Naive thymus-derived CD8-positive, alpha-beta T cell (primary cell): ENCODE measurements at regions of chr3 and their contacts with region 1.

Region 1: DNA sequence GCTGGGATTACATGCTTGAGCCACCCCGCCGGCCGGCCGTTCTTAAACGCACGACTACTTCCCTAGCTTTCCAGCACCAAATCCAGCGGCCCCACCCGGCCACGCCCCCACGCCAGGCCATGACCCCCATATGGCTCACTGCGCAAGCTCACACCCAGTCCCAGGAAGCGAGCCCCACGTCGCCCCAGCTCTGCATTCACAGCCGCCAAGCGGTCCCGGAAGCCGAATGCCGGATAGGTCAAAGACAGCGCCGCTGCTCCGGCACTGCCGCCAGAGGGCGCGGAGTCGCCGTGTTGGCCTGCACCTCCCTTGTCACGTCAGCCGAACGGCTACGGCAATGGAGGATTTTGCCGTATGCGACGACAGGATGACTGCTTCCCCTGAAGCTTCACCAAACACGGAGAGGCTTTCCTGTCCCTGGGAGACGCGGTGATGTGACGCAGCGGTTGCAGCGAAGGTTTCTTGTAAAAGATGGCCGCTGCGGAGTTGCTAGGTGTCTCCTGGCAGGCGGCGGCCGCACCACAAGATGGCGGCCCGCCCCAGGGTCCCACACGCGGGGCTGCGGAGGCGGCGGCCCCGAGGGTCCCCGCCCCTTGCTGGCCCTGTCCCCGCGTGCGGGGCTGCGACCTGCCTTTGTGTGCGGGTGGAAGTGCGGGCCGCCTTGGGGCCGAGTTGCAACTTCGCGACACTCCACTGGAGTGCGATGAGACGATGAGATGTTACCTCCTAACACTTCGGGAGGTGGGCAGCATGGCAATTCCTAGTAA is 30.2 kb upstream of the RPN1 start:
- DNase-seq: peak; percentile 95 to 100 (median 96)
- ATAC-seq: peak; percentile 88 to 89
- H3K4me3 Mint-ChIP-seq: peak overlapping the region; percentile 90 to 98 (median 96)
- H3K27ac Mint-ChIP-seq: peak overlapping the region; percentile 96 to 100 (median 99)
- H3K4me1 Mint-ChIP-seq: peaks cover 14 to 59% (median 42%) of the 10 kb centered on the region in 4 donors
- H3K27me3 Mint-ChIP-seq: no peaks in the 10 kb centered on the region

Region 2: DNA sequence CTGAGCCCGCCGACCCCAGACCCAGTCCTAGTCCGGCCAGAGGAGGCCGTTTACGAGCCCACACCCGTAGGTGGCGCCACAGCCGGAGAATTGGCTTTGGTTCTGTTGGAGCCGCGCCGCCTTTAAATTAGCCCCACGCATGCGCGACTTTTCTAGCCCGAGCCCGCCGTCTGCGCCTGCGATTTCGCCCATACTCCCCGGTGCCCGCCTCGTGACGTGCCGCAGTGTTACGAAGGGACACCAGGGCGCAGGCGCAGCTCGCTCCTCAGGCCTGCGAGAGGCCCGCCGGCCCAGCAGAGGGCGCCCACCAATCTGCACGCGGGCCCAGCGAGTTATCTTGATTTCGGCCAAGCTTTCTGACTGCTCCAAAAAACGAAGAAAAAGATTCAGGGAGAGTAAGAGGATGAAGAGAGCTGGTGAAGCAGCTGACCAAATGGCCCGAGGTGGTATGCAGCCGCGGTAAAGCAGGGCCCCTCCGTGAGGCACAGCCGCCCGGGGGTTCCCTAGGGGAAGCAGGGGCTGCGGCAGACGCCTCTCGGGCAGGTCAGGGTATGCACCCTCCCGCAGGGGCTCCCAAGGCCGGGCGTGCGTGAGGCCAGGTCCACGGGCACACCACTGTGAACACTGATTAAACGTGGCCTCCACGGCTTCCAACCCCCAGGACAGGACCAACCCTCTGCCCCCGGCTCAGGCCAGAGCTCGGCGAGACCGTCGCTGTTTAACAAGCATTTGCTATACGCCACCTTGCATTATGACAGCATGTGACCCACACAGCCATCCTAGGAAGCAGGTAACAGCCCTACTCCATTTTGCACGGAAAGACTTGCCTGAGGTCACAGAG is 63.0 kb before region 1 on chr3:
- POLR2A ChIA-PET with region 1: interaction called, 11 read pairs
- DNase-seq: peak; percentile 97 to 99 (median 99)
- ATAC-seq: peak; percentile 89 to 91
- H3K4me3 Mint-ChIP-seq: peak overlapping the region; percentile 94 to 99 (median 97)
- H3K27ac Mint-ChIP-seq: peak overlapping the region; percentile 93 to 99 (median 97)
- H3K4me1 Mint-ChIP-seq: peaks cover 13 to 32% (median 27%) of the 10 kb centered on the region in 4 donors
- H3K27me3 Mint-ChIP-seq: no peaks in the 10 kb centered on the region

Region 3: DNA sequence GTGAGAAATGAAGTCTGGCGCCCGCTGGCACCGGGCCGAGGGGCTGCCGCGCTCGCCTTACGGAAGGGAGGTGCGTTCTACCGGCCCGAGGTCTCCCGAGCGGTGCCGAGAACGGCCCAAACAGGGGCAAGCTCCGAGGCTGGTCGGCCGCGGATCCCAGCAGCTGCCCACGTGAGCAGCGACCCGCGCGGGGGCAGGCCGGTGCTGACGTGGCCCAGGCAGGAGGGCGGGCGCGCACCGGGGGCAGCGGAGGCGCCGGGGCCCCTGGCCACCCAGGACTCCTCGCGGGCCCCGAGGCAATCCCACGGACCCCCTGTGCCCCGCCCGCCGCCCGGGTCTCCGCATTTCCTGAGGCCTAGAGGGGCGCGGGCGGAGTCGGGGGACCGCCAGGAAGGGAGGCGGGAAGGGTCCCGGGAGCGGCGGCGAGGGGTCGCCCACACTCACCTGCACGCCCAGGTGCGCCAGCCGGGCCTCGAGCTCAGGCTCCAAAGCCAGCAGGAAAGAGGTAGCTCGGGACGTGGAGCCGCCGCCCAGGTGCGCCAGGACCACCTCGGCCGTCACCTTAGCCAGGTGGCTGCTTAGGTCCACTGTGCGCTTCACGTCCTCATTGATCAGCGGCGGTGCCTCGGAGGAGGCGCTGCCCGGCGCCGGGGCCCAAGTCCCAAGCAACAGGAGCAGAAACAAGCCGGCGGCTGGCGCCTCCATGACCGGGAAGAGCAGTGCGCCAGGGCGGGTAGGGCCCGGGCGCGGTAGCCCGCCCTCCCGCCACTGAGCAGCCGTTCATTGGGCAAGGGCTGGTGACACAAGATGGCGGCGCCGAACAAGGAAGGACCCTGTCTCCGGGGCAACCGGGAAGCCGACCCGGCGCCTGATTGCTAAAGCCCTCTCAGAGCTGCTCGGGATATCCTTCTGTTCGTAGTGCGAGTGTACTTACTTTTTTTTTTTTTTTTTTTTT is 30.4 kb before region 1 on chr3 and contains the start of gene RPN1:
- POLR2A ChIA-PET with region 1: interaction called, 13 read pairs
- DNase-seq: peak; percentile 91 to 97 (median 96)
- ATAC-seq: peak; percentile 94 to 95
- H3K4me3 Mint-ChIP-seq: peak within 1 kb of the TSS; percentile 83 to 92 (median 88)
- H3K27ac Mint-ChIP-seq: peak within 1 kb of the TSS; percentile 86 to 93 (median 89)
- H3K4me1 Mint-ChIP-seq: peaks cover 18 to 53% (median 40%) of the 10 kb centered on the region in 4 donors
- H3K27me3 Mint-ChIP-seq: no peaks in the 10 kb centered on the region
- polyA plus RNA-seq, gene RPN1: 178 to 224 (median 179) TPM

Region 4: GRCh38 chr3:128787256-128788240 is 106.8 kb after region 1 on chr3:
- POLR2A ChIA-PET with region 1: interaction called, 30 read pairs
- DNase-seq: peak in 3 of 10 donors; percentile 26 to 37 (median 29)
- ATAC-seq: peak; percentile 32 to 35
- H3K4me3 Mint-ChIP-seq: peak overlapping the region; percentile 71 to 91 (median 79)
- H3K27ac Mint-ChIP-seq: peak overlapping the region; percentile 78 to 99 (median 96)
- H3K4me1 Mint-ChIP-seq: peaks cover 40 to 96% (median 86%) of the 10 kb centered on the region in 4 donors
- H3K27me3 Mint-ChIP-seq: no peaks in the 10 kb centered on the region

Region 5: DNA sequence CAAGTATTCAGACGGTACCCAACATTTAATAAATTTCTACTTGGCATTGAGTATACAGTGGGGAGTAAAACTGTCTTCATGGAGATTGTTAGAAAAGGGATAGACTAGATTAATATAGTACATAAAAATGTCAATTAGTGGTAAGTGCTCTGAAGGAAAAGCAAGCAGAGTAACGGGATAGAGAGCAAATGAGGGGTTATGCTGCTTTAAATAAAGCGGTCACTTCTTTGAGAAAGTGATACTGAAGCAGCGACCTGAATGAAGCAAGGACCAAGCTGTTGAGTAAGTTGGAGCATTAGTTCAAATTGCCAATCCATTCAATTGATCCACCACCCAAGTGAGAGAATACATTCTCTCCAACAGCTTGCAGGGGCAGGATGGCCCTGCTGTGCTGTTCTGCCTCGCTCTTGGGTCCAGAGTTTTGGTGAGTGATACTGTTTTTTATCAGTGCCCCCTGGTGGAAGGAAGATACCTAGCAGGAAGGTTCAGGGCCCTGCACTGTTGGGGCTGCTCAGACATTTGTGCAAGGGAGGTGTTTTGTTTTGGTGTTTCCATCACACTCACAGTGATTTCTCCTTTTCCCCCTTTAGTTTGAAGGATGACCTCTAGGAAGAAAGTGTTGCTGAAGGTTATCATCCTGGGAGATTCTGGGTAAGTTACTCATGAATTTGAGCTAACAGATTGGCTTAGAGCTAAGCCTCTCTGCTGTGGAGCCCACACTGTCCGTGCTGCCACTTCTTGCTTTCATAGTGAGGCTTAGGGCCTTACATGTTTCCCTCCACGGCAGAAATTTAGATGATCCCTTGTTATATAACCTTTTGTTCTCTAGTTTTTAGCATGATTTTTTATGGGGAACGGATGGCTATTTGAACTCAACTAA is 114.2 kb after region 1 on chr3:
- POLR2A ChIA-PET with region 1: interaction called, 30 read pairs
- DNase-seq: peak; percentile 33 to 83 (median 66)
- ATAC-seq: peak; percentile 98 to 99
- H3K4me3 Mint-ChIP-seq: peak overlapping the region in 8 of 10 donors; percentile 3 to 64 (median 39)
- H3K27ac Mint-ChIP-seq: peak overlapping the region; percentile 70 to 96 (median 79)
- H3K4me1 Mint-ChIP-seq: peaks cover 25 to 69% (median 56%) of the 10 kb centered on the region in 4 donors
- H3K27me3 Mint-ChIP-seq: no peaks in the 10 kb centered on the region

Region 6: GRCh38 chr3:128804017-128804810 is 123.4 kb after region 1 on chr3:
- POLR2A ChIA-PET with region 1: interaction called, 14 read pairs
- DNase-seq: peak; percentile 33 to 86 (median 68)
- ATAC-seq: peak; percentile 94 to 97
- H3K4me3 Mint-ChIP-seq: peak overlapping the region; percentile 73 to 90 (median 84)
- H3K27ac Mint-ChIP-seq: peak overlapping the region; percentile 90 to 98 (median 96)
- H3K4me1 Mint-ChIP-seq: peaks cover 36 to 77% (median 71%) of the 10 kb centered on the region in 4 donors
- H3K27me3 Mint-ChIP-seq: no peaks in the 10 kb centered on the region

Region 7: DNA sequence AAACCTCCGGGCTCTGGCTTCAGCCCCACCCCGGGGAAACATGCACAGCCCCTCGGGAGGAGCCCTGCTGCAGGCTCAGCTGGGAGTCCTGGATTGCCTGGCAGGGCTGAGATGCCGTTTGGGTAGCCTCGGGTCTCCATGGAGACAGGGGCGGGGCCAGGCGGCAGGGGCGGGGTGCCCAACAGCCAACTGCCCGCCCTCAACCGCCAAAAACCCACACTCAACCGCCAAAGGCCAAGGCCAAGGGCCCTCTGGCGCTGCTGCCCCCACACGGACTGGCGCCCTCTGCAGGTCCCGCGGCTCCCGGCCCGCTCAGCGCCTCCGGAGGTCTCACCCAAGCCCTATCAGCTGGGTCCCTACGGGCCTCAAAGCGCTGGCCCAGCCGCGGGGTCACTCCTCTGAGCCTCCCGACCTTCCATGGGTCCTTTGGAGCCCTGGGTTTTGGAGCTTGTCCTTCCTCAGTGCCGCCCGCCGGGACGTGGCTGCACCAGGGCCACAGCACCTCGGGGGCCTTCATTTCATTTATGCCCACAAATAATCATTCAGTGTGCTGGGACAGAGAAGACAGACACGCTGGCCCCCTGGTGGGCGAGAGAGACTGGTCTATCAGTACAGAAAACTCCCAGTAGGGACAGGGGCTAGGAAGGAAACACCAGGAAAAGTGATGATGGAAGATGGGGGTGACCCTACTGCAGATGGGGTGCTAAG is 165.1 kb after region 1 on chr3:
- POLR2A ChIA-PET with region 1: interaction called, 11 read pairs
- DNase-seq: peak; percentile 61 to 87 (median 73)
- ATAC-seq: peak; percentile 83 to 86
- H3K4me3 Mint-ChIP-seq: peak overlapping the region; percentile 68 to 92 (median 87)
- H3K27ac Mint-ChIP-seq: peak overlapping the region; percentile 70 to 92 (median 85)
- H3K4me1 Mint-ChIP-seq: peaks cover 8 to 20% (median 18%) of the 10 kb centered on the region in 4 donors
- H3K27me3 Mint-ChIP-seq: no peaks in the 10 kb centered on the region

Region 8: DNA sequence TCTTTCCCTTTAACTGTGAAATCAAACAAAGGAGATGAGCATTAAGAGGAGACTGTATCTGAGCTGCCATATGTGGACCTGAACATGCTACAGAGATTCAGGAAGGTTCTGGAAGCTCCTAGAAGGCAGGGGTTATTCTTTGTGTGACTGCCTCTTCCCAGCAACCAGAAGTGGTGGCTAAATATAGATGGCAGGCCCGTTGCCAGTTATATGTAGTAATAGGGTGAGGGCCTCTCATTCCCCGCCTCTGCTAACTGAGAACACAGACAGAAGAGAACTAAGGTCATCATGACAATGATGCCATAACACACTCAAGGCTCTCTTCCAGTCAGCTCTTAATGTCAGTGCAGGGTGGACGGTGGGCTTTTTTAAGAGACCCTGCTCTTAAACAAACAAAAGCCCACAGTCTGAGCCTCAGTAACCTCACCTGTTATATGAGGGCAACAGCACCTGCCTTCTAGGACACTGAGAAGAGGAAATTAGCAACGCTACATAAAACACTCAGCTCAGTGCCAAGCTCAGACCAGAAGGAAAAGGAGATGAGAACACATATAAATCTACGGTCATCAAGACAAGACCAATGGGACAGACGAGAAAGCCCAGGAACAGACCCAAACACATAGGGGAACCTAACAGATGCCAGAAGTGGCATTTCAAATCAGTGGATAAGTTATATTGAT is 290.8 kb after region 1 on chr3:
- POLR2A ChIA-PET with region 1: no interaction called
- DNase-seq: no peak
- ATAC-seq: no peak
- H3K4me3 Mint-ChIP-seq: no peak overlapping the region
- H3K27ac Mint-ChIP-seq: no peak overlapping the region
- H3K4me1 Mint-ChIP-seq: peaks cover 0 to 20% (median 6%) of the 10 kb centered on the region in 4 donors
- H3K27me3 Mint-ChIP-seq: peaks cover 0 to 2% (median 0%) of the 10 kb centered on the region in 5 donors